Left colon (tissue), 2 donors: ENCODE measurements at regions of chr11 and their contacts with region 1.

Region 1: GRCh38 chr11:129117595-129118350 is 74.4 kb downstream of the ARHGAP32 start:
- DNase-seq: peak in 1 of 2 donors; percentile 18
- ATAC-seq: peak; percentile 76

Region 2: DNA sequence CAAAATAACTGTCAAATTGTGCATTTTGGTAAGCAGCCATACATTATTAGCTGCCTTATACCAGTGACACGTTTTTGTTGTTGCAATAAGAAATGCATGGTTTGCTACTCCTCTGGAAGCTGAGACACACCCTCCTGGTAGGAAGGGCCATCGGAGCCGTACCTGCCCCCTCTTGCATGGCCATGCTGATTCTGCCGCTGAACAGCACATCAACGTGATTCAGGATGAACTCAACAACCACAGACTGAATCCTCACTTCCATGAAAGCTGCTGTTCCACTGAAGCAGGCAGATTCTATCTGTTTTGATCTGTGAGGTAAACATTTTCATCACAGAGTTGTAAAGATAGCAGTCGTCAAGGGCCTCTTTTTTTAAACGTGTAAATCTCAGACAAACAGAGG is 136.5 kb before region 1 on chr11:
- intact Hi-C with region 1: no loop called
- DNase-seq: no peak
- ATAC-seq: no peak

Region 3: GRCh38 chr11:129331871-129332274 is 214.1 kb after region 1 on chr11:
- intact Hi-C with region 1: loop called in 1 of 2 experiments (anchors 5 kb)
- DNase-seq: peak; percentile 74 to 89
- ATAC-seq: peak; percentile 96

Region 4: DNA sequence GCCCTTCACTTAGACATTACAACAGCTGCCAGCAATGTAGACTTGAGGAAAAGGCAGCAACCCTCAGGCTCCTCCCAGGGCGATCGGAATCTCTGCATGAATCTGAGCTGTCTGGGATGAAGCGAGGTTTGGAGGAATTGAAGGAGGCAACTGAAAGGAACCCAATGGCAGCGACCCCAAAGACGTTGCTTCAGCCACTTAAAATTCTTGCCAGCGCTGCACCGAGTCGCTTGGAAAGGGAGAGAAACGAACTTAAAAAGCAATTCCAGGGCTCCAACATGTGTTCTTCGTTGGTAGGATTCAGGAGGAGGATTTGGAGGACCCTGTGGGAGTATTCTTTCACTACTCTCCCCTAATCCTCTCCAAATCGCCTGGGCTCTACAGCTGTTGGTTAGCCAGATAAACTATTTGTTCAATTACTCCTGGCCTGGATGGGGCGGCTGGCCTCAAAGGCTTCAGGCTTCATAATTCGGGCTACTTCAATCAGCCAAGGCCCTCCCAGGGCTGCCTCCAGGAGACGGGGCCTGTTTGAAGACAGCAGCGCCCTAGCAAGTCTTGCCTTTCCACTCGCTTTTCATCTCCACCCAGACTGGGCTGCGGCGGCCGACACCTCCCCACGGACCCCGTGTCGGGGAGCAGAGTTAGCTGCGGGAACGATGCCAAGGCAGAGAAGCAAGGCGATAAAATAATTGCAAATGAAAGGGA is 625.5 kb after region 1 on chr11:
- intact Hi-C with region 1: loop called in 1 of 2 experiments (anchors 10 kb)
- DNase-seq: no peak
- ATAC-seq: no peak